Gastrocnemius medialis (tissue), 4 donors: ENCODE measurements at regions of chr9 and their contacts with region 1.

Region 1: GRCh38 chr9:135907431-135908092 is at the start of gene CAMSAP1:
- DNase-seq: peak; percentile 87 to 91
- ATAC-seq: peak; percentile 62 to 68
- H3K4me3 ChIP-seq: peak within 1 kb of the TSS; percentile 70 to 81 (median 72)
- H3K27ac ChIP-seq: peak within 1 kb of the TSS; percentile 90 to 92 (median 90)
- H3K4me1 ChIP-seq: peaks cover 47 to 52% of the 10 kb centered on the region in 2 donors
- H3K27me3 ChIP-seq: no peaks in the 10 kb centered on the region
- CTCF ChIP-seq: no peak
- POLR2A ChIP-seq: peak; percentile 92 to 94
- total RNA-seq, gene CAMSAP1: 54.8 to 94.9 (median 82.9) TPM

Region 2: GRCh38 chr9:135692410-135692809 is 215.2 kb before region 1 on chr9:
- in situ Hi-C with region 1: no loop called
- intact Hi-C with region 1: no loop called
- DNase-seq: no peak
- ATAC-seq: no peak
- H3K4me3 ChIP-seq: no peak overlapping the region
- H3K27ac ChIP-seq: no peak overlapping the region
- H3K4me1 ChIP-seq: no peaks in the 10 kb centered on the region
- H3K27me3 ChIP-seq: peaks cover 0 to 5% (median 0%) of the 10 kb centered on the region in 3 donors
- CTCF ChIP-seq: no peak
- POLR2A ChIP-seq: no peak

Region 3: GRCh38 chr9:135887585-135888050 is 19.9 kb before region 1 on chr9:
- in situ Hi-C with region 1: no loop called
- intact Hi-C with region 1: no loop called
- DNase-seq: no peak
- ATAC-seq: peak in 1 of 2 donors; percentile 18
- H3K4me3 ChIP-seq: no peak overlapping the region
- H3K27ac ChIP-seq: peak overlapping the region; percentile 55 to 68 (median 60)
- H3K4me1 ChIP-seq: peaks cover 60 to 66% of the 10 kb centered on the region in 2 donors
- H3K27me3 ChIP-seq: no peaks in the 10 kb centered on the region
- CTCF ChIP-seq: no peak
- POLR2A ChIP-seq: no peak

Region 4: GRCh38 chr9:135926402-135927194 is 19.0 kb after region 1 on chr9:
- in situ Hi-C with region 1: no loop called
- intact Hi-C with region 1: loop called (anchors 2 kb)
- DNase-seq: peak; percentile 95 to 97
- ATAC-seq: peak; percentile 83 to 89
- H3K4me3 ChIP-seq: no peak overlapping the region
- H3K27ac ChIP-seq: peak overlapping the region; percentile 95 to 99 (median 96)
- H3K4me1 ChIP-seq: peaks cover 20 to 45% of the 10 kb centered on the region in 2 donors
- H3K27me3 ChIP-seq: no peaks in the 10 kb centered on the region
- CTCF ChIP-seq: peak in 1 of 5 experiments; percentile 30
- POLR2A ChIP-seq: peak; percentile 35 to 72

Region 5: GRCh38 chr9:135961277-135961705 is 53.7 kb after region 1 on chr9 and contains the start of gene UBAC1:
- in situ Hi-C with region 1: no loop called
- intact Hi-C with region 1: loop called (anchors 1 kb)
- DNase-seq: peak; percentile 93 to 96
- ATAC-seq: peak; percentile 37 to 55
- H3K4me3 ChIP-seq: peak within 1 kb of the TSS; percentile 87 to 99 (median 95)
- H3K27ac ChIP-seq: peak within 1 kb of the TSS; percentile 97 to 100 (median 100)
- H3K4me1 ChIP-seq: peaks cover 26 to 37% of the 10 kb centered on the region in 2 donors
- H3K27me3 ChIP-seq: no peaks in the 10 kb centered on the region
- CTCF ChIP-seq: peak; percentile 44 to 66 (median 57)
- POLR2A ChIP-seq: no peak
- total RNA-seq, gene UBAC1: 218 to 263 (median 248) TPM

Region 6: DNA sequence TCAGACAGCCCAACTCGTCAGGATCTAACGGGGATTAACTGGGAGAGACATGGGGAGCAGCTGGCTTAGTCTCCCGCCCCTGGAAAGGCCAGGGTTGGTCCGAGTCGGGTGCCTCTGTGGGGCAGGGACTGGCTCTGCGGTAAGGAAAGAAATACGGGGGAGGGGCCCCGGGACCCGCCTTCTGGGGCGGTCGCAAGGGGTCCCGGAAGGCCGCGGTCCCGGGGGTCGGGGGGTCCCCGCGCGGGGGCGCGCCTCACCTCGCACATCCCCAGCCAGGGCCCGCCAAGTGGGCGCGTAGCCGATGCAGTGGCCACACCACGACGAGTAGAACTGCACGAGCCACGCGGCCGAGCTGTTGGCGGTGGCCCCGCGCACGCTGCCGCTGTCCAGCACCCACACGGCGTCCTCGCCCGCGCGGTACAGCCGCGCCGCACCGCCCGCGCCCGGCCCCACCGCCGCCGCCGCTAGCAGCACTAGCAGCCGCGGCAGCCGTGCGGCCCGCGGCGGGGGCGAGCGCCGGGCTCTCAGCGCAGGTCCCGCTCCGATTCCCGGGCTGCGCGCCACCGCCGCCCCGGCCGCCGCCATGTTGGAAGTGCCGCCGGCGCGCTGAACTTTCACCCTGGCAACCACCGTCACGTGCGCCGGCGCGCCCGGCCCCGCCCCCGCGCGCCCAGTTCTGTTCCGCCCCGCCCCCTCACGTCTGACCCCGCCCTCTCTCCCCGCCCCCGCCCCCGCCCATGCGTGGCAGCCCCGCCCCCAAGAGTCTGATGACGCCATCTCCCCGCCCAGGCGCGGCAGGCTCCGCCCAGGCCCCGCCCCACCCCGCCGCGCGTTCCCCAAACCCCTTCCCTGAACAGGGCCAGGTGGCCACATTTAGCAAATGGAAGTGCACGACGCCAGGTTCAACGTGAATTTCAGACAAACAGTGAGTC is 337.9 kb after region 1 on chr9 and contains the start of gene QSOX2:
- in situ Hi-C with region 1: no loop called
- intact Hi-C with region 1: loop called (anchors 10 kb)
- DNase-seq: peak; percentile 73 to 77
- ATAC-seq: peak; percentile 90 to 91
- H3K4me3 ChIP-seq: peak within 1 kb of the TSS; percentile 67 to 99 (median 83)
- H3K27ac ChIP-seq: peak within 1 kb of the TSS; percentile 49 to 61 (median 58)
- H3K4me1 ChIP-seq: peaks cover 14 to 19% of the 10 kb centered on the region in 2 donors
- H3K27me3 ChIP-seq: no peaks in the 10 kb centered on the region
- CTCF ChIP-seq: no peak
- POLR2A ChIP-seq: no peak
- total RNA-seq, gene QSOX2: 3.3 to 5.8 (median 5.2) TPM